ENCODE measurements at regions of chr15 and their contacts with region 1.

Region 1: DNA sequence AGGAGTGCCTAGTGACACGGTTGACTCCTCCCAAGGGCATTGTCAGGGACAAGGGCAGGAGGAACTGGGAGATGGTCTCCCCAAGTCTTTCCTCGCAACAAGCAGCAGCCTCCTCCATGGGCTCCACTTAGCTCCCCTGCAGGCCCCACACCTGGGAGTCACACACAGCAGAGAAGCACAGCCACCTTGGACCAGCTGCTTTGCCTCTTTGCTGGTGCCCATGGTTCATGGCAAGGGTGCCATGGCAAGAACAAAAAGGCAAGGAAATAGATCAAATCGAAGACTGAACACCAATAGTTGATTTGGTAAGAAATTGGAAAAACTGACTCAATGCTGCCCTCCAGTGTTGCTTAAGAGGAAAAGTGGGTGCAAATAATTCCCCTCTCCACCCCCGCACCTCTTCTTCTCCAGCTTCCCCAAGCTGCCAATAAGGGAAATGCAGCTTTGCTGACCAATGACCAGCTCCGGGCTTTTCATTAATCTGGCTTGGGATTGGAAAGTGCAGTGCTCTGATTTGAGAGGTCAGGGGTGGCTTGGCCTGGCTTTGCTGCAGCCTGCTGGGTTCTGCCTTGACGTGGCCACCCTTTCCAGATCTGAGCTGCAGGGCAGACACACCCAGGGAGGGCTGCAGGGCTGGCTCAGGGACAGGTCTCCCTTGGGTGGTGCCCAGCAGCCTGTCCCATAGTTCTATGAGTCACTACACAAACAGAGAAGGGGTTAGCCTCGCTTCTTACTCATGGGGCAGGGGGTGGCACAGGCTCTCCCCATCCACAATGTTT is 162.0 kb downstream of the KLF13 start:
- DNase-seq: peak; percentile 82 to 87 (median 83)
- ATAC-seq: peak; percentile 91 to 95 (median 92)
- H3K4me3 ChIP-seq: no peak overlapping the region
- H3K27ac ChIP-seq: peak overlapping the region in 2 of 3 donors; percentile 40 to 46
- H3K4me1 ChIP-seq: peaks cover 0 to 19% (median 8%) of the 10 kb centered on the region in 4 donors
- H3K27me3 ChIP-seq: no peaks in the 10 kb centered on the region
- CTCF ChIP-seq: peak; percentile 89 to 99 (median 93)
- POLR2A ChIP-seq: no peak

Region 2: GRCh38 chr15:31200735-31201151 is 287.9 kb before region 1 on chr15:
- intact Hi-C with region 1: loop called (anchors 5 to 10 kb)
- DNase-seq: peak; percentile 72 to 85 (median 85)
- ATAC-seq: peak; percentile 73 to 83 (median 78)
- H3K4me3 ChIP-seq: no peak overlapping the region
- H3K27ac ChIP-seq: no peak overlapping the region
- H3K4me1 ChIP-seq: peaks cover 0 to 15% (median 7%) of the 10 kb centered on the region in 4 donors
- H3K27me3 ChIP-seq: no peaks in the 10 kb centered on the region
- CTCF ChIP-seq: peak; percentile 35 to 66 (median 60)
- POLR2A ChIP-seq: no peak